Motor neuron (in vitro differentiated cells): ENCODE measurements at regions of chr5 and their contacts with region 1.

Region 1: DNA sequence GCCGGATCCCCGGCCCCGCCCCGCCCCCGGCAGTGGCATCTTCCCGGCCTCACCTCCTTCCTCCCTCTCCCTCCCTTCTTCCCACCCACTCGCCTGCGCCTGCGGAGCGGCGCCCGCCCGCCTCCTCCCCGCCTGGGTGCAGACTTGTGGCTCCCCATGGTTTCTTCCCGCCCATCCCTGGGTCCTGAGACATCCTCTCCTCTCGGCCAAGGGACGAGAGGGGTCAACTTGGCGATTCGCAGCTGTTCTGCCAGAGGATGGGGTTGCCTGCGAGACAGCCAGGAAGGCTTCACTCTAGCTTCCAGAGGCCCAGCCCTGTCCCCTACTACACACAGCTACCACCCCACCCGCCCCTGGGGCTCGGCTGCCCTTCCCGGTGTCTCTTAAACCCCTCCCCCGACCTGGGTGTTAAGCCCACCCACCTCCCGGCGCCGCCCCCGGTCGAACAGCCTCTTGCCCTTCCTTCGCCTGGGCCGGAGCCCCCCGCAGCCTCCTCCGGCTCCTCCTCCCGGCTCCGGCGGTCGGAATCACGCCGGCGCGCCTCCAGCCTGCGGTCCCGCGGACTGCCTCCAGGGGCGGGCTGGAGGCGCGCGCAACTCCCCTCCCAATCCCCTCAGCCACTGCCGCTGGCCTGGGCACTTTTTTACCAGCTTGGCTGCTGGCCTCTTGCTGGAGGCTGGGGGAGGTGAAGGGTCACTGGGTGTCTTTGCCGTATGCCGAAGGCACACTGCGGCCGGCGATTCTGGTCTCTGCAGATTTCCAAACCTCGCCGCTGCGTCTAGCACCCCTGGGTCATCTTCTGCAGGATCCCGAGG is 1.9 kb downstream of the JADE2 start:
- ATAC-seq: peak; percentile 53 to 71 (median 68)
- H3K4me3 ChIP-seq: peak overlapping the region; percentile 53 to 99 (median 72)
- H3K27ac ChIP-seq: peak overlapping the region; percentile 41 to 72
- H3K4me1 ChIP-seq: peaks cover 3 to 25% of the 10 kb centered on the region in 2 donors

Region 2: DNA sequence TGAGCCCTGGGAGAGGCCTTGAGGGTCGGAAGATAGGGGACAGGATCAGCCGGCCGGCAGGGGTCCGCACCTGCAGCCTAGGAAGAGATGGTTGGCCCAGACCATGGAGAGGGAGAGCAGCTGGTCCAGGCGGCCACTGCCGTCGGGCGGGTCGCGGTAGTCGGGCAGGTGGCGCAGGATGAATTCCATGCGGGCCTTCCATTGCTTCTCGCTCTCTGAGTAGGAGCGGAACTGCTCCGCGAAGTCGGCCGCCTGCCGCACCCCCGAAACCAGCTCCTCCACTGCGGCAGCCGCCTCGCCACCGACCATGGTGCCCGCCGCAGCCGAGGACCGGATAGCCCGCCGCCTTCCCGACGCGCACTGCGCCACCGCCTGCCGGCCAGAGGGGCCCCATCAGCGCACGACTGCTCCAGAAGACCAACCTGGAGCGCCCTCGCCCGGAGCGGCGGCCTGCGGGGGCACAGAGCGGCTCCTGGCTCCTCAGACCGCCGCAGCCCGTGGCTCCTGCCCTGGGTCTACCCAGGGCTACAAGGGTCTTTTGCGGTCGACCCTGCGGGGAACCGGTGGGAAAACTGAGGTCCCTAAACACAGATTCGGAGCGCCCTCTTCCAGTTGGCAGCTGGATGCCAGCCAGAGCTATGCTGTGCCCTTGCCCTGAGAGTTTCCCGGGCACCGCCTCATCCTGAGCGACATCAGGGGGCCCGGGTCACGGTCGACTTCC is 115.6 kb before region 1 on chr5 and contains the start of gene CDKN2AIPNL:
- in situ Hi-C with region 1: loop called in 3 of 9 experiments (anchors 10 to 25 kb)
- ATAC-seq: peak; percentile 99 to 100 (median 99)
- H3K4me3 ChIP-seq: peak within 1 kb of the TSS; percentile 66 to 91 (median 73)
- H3K27ac ChIP-seq: peak within 1 kb of the TSS; percentile 37 to 59
- H3K4me1 ChIP-seq: peaks cover 9 to 12% of the 10 kb centered on the region in 2 donors
- total RNA-seq, gene CDKN2AIPNL: 30.6 to 67.3 (median 44.6) TPM

Region 3: DNA sequence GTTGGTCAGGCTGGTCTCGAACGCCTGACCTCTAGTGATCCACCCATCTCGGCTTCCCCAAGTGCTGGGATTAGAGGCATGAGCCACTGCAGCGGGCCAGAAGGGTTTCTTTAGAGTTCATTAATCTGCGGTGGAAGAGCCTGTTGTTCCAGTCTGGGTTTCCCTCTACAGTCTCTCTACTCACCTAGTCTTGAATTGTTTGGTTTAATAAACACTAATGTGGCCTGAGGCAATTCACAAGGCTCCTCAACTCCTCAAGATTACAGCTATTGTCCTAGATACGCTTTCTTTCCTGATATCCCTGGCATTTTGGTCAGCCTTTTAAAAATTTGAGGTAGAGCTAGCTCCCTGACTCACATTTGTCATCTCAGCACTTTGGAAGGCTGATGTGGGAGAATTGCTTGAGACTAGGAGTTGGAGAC is 109.8 kb after region 1 on chr5:
- in situ Hi-C with region 1: no loop called
- ATAC-seq: no peak
- H3K4me3 ChIP-seq: no peak overlapping the region
- H3K27ac ChIP-seq: no peak overlapping the region
- H3K4me1 ChIP-seq: no peaks in the 10 kb centered on the region